Aorta (tissue), 5 donors: ENCODE measurements at regions of chr9 and their contacts with region 1.

Region 1: GRCh38 chr9:111037381-111038305 is 627 bp downstream of the LPAR1 start:
- DNase-seq: peak; percentile 55 to 84
- ATAC-seq: peak; percentile 61
- H3K4me3 ChIP-seq: peak overlapping the region; percentile 80 to 87
- H3K27ac ChIP-seq: peak overlapping the region; percentile 20 to 78
- H3K4me1 ChIP-seq: peaks cover 0 to 2% of the 10 kb centered on the region in 2 donors
- H3K27me3 ChIP-seq: no peaks in the 10 kb centered on the region

Region 2: GRCh38 chr9:110638381-110638954 is 399.2 kb before region 1 on chr9:
- intact Hi-C with region 1: loop called in 1 of 2 experiments (anchors 10 kb)
- DNase-seq: no peak
- ATAC-seq: no peak
- H3K4me3 ChIP-seq: no peak overlapping the region
- H3K27ac ChIP-seq: no peak overlapping the region
- H3K4me1 ChIP-seq: no peaks in the 10 kb centered on the region
- H3K27me3 ChIP-seq: no peaks in the 10 kb centered on the region

Region 3: GRCh38 chr9:110650991-110651411 is 386.6 kb before region 1 on chr9:
- intact Hi-C with region 1: loop called (anchors 10 kb)
- DNase-seq: peak in 1 of 2 donors; percentile 37
- ATAC-seq: peak; percentile 59
- H3K4me3 ChIP-seq: no peak overlapping the region
- H3K27ac ChIP-seq: no peak overlapping the region
- H3K4me1 ChIP-seq: no peaks in the 10 kb centered on the region
- H3K27me3 ChIP-seq: no peaks in the 10 kb centered on the region

Region 4: GRCh38 chr9:110744753-110745384 is 292.8 kb before region 1 on chr9:
- intact Hi-C with region 1: loop called in 1 of 2 experiments (anchors 2 kb)
- DNase-seq: no peak
- ATAC-seq: peak; percentile 71
- H3K4me3 ChIP-seq: no peak overlapping the region
- H3K27ac ChIP-seq: peak overlapping the region; percentile 69 to 96
- H3K4me1 ChIP-seq: peaks cover 0 to 9% of the 10 kb centered on the region in 2 donors
- H3K27me3 ChIP-seq: no peaks in the 10 kb centered on the region

Region 5: DNA sequence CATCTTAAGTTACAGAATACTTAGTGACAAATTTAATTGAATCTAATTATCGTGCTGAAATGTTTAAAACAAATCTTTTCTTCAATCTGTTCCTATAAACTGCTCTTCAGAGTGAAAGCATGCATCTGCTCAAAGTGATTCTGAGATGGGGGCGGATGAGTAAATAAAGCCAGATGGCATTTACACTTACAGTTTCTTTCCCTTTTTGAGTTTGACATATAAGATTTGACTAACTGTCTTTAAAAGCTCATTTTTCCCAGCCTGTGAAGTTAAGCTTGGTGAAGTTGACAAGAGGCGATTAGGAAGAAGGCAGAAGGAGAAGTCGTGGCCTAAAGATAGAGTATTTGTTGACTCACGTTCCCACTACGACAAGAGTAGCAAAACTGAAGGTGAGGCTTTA is 136.7 kb before region 1 on chr9:
- intact Hi-C with region 1: loop called in 1 of 2 experiments (anchors 5 kb)
- DNase-seq: no peak
- ATAC-seq: no peak
- H3K4me3 ChIP-seq: no peak overlapping the region
- H3K27ac ChIP-seq: peak overlapping the region; percentile 71 to 76
- H3K4me1 ChIP-seq: peaks cover 7 to 11% of the 10 kb centered on the region in 2 donors
- H3K27me3 ChIP-seq: no peaks in the 10 kb centered on the region

Region 6: DNA sequence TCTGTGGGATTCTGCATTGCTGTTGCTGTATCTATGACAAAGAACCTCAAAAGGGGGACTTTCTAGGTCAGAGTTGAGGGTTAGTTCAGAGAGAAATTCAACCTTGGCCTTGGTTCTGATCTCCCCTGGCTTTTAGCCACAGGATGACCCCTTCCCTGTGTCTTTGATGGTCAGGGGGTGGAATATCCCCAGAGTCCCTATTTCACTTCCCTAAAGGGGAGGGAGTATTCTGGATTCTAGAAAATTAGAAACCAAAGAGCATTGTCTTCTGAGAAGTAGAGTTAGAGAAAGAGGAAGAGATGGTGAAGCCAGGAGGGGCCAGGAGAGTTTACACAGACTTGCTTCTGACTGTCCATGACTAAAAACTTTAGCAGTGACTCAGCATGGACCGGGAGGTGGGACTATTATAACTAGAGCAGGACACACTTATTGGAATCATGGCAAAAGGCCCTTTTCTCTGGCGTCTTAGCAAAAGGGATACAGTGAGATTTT is 56.8 kb after region 1 on chr9:
- intact Hi-C with region 1: no loop called
- DNase-seq: peak in 1 of 2 donors; percentile 68
- ATAC-seq: peak; percentile 85
- H3K4me3 ChIP-seq: no peak overlapping the region
- H3K27ac ChIP-seq: no peak overlapping the region
- H3K4me1 ChIP-seq: peaks cover 0 to 4% of the 10 kb centered on the region in 2 donors
- H3K27me3 ChIP-seq: no peaks in the 10 kb centered on the region

Region 7: GRCh38 chr9:111108946-111109345 is 71.3 kb after region 1 on chr9:
- intact Hi-C with region 1: no loop called
- DNase-seq: no peak
- ATAC-seq: no peak
- H3K4me3 ChIP-seq: no peak overlapping the region
- H3K27ac ChIP-seq: no peak overlapping the region
- H3K4me1 ChIP-seq: no peaks in the 10 kb centered on the region
- H3K27me3 ChIP-seq: no peaks in the 10 kb centered on the region

Region 8: DNA sequence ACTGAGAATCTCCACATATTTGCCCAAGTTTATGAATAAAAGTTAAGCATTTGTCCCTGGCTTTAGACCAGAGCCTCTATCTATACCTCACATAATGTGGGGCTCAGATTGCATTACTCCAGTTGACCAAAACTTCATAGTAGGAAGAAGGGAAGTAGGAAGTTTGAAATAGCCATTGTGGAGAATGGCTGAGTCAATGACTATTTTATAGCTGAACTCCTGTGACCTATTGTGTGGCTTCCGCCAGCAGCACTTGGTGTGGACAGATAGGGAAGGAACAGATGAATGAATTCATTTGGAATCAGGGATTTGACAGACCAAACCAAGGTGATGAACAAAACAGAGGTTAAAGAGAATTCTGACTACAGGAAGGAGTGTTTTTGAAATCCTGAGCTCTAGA is 93.6 kb after region 1 on chr9:
- intact Hi-C with region 1: no loop called
- DNase-seq: no peak
- ATAC-seq: no peak
- H3K4me3 ChIP-seq: no peak overlapping the region
- H3K27ac ChIP-seq: no peak overlapping the region
- H3K4me1 ChIP-seq: no peaks in the 10 kb centered on the region
- H3K27me3 ChIP-seq: no peaks in the 10 kb centered on the region

Region 9: GRCh38 chr9:111287127-111287526 is 249.5 kb after region 1 on chr9:
- intact Hi-C with region 1: no loop called
- DNase-seq: no peak
- ATAC-seq: no peak
- H3K4me3 ChIP-seq: no peak overlapping the region
- H3K27ac ChIP-seq: no peak overlapping the region
- H3K4me1 ChIP-seq: no peaks in the 10 kb centered on the region
- H3K27me3 ChIP-seq: no peaks in the 10 kb centered on the region

Region 10: DNA sequence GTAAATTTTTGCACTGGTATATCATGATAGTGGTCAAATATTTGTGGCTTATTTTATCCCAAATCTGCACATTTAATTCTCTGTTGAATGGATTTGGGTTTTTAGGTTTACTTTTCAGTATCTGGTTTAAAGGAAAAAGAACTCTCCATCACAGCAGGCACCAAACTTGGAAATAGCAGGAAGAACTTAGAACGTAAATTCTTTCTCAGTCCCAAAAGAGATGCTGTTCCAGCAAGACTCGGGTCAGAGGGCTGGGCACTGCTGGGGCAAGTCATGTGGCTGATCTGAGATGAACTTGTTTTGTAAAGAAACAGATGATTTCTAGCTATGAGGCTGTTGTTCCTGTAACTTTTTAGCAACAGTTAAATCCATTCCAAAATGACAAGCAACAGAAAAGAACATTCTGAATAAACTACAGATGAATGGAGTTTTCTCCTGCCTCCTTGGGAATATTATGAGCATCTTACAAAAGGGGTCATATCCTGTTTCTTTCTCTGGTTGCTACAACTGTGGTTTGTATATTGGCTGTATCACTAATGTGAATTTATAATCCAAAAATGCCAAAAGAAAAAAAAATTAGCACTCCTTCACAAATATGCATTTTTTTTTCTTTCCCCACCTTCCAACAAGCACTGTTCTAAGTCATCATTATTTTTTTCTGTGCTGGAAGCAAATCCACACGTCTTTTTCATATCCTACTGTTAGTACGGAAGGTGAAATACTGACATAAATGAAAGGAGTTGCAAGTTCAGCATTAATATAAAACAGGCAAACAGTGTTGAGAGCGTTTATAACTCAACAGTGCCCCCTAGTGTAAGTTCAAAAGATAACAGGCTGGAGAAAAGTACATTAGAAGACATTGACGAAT is 261.3 kb after region 1 on chr9:
- intact Hi-C with region 1: loop called (anchors 5 kb)
- DNase-seq: peak in 1 of 2 donors; percentile 69
- ATAC-seq: peak; percentile 92
- H3K4me3 ChIP-seq: peak overlapping the region in 1 of 2 donors; percentile 48
- H3K27ac ChIP-seq: peak overlapping the region in 1 of 2 donors; percentile 81
- H3K4me1 ChIP-seq: no peaks in the 10 kb centered on the region
- H3K27me3 ChIP-seq: no peaks in the 10 kb centered on the region